ENCODE measurements at regions of chr2 and their contacts with region 1.

Region 1: DNA sequence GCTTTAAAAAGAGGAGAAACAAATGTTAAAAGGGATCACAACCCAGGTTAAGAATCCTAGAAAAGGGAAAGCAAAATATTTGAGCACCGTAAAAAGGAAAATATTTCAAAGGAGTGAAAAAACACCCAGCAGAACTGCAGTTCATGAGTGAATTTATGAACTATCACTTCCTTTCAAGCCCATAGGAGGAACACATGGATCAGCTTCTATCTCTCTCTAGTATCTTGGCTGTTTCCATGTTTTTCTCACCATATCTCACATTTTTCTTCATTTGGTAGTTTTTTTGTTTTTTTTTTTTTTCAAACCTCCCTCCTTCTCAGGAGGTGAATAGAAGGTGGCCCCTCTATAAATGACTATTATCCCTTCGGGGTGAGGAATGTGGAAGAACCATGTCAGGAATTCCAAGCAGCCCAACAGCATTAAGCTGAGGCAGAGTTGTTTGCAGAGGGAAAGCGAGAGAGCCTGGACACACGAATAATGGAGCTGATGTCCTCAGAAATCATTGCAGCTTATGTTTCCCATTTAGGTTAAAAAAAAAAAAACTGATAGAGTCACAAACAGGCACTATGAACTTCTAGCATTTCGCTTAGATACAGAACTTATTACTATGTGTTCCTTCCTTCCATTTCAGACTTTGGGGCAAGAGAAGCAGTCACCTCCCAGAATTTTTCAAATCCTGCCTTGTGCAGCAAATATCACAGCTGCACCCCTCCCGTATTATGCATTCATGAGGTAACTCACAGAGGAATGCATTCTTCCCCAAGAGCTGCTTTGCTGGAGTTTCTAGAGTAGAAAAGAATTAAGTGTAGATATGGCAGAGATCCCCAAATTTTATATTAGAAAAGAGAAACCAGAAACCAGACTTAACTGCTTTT is 315.6 kb downstream of the IRS1 start:
- DNase-seq: peak; percentile 61
- ATAC-seq: peak; percentile 89
- H3K4me3 ChIP-seq: no peak overlapping the region; the same call in 1 of the 2 replicates
- H3K27ac ChIP-seq: peak overlapping the region; percentile 43
- H3K4me1 ChIP-seq: peaks cover 15% of the 10 kb centered on the region
- H3K27me3 ChIP-seq: no peaks in the 10 kb centered on the region
- CTCF ChIP-seq: no peak
- POLR2A ChIP-seq: no peak
- RAD21 ChIP-seq: no peak

Region 2: GRCh38 chr2:226583715-226584114 is 99.7 kb after region 1 on chr2:
- CTCF ChIA-PET with region 1: no interaction called
- POLR2A ChIA-PET with region 1: no interaction called
- dilution Hi-C with region 1: no loop called
- in situ Hi-C with region 1: no loop called
- intact Hi-C with region 1: loop called (anchors 5 kb)
- DNase-seq: peak; percentile 89
- ATAC-seq: peak; percentile 90
- H3K4me3 ChIP-seq: no peak overlapping the region
- H3K27ac ChIP-seq: peak overlapping the region; percentile 34
- H3K4me1 ChIP-seq: peaks cover 23% of the 10 kb centered on the region; the same call in 1 of the 2 replicates
- H3K27me3 ChIP-seq: no peaks in the 10 kb centered on the region
- CTCF ChIP-seq: no peak
- POLR2A ChIP-seq: no peak
- RAD21 ChIP-seq: 0 out of 2 replicates have a peak, but pooled peaks have one; percentile 10

Region 3: DNA sequence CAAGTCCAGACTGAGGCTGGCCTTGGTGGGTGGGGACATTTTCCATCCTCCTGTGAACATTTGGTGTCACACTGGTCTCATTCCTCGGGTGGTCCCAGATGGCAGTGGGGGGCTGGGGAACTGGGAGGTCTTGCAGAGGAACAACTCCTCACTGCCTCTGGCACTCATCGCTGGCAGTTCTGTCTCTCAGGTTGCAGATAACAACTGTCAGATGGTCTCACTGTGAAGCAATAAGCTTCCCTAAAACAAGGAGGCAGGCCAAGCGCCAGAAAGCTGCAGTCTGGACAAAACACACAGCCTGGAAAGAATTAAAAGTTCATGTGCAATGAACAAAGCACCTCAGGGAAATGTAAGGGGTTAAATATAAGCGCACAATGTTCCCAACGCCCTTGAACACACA is 237.6 kb after region 1 on chr2:
- CTCF ChIA-PET with region 1: no interaction called
- POLR2A ChIA-PET with region 1: no interaction called
- dilution Hi-C with region 1: no loop called
- in situ Hi-C with region 1: no loop called
- intact Hi-C with region 1: loop called (anchors 2 kb)
- DNase-seq: peak; percentile 36
- ATAC-seq: 0 out of 2 replicates have a peak, but pooled peaks have one; percentile 19
- H3K4me3 ChIP-seq: no peak overlapping the region
- H3K27ac ChIP-seq: no peak overlapping the region
- H3K4me1 ChIP-seq: peaks cover 12% of the 10 kb centered on the region
- H3K27me3 ChIP-seq: no peaks in the 10 kb centered on the region
- CTCF ChIP-seq: no peak
- POLR2A ChIP-seq: no peak
- RAD21 ChIP-seq: no peak

Region 4: DNA sequence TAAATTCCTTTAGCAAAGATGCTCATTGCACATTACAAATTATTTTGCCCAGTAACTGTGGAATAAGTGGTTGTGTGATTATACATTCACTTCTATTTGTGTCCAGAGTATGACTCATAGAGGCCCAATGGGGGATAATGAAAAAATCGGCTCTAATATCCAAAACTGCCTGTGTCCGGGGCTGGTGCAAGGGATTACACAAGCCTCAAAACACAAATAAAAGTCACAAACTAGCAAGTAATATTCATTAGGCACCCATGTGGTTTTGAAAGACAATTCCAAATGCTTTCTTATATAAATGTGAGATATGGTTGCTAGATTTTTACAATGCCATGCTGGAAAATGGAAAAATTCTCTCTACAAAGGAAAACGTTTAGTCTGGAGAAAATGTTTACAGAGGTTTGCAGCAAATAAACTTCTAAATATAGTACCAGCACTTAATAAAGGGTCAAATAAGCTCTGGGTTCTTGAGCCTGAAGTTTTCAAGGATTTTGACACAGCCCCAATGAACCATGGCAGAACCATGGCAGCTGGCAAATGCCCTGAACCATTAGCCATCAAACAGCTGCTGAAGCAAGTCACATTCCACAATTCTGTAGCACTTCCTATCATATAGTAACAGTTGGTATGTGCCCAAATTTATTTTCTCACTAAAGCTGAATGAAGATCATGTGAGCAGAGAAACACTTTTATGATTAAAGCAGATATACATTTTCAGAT is 275.1 kb after region 1 on chr2:
- CTCF ChIA-PET with region 1: interaction called, 5 read pairs
- POLR2A ChIA-PET with region 1: interaction called, 10 read pairs
- dilution Hi-C with region 1: no loop called
- in situ Hi-C with region 1: no loop called
- intact Hi-C with region 1: no loop called
- DNase-seq: peak; percentile 87
- ATAC-seq: peak; percentile 24
- H3K4me3 ChIP-seq: no peak overlapping the region
- H3K27ac ChIP-seq: peak overlapping the region; percentile 96
- H3K4me1 ChIP-seq: peaks cover 28% of the 10 kb centered on the region
- H3K27me3 ChIP-seq: no peaks in the 10 kb centered on the region
- CTCF ChIP-seq: no peak
- POLR2A ChIP-seq: no peak
- RAD21 ChIP-seq: no peak

Region 5: GRCh38 chr2:226984750-226985582 is 501.0 kb after region 1 on chr2:
- CTCF ChIA-PET with region 1: no interaction called
- POLR2A ChIA-PET with region 1: no interaction called
- dilution Hi-C with region 1: no loop called
- in situ Hi-C with region 1: no loop called
- intact Hi-C with region 1: loop called (anchors 5 kb)
- DNase-seq: peak; percentile 83
- ATAC-seq: peak; percentile 92
- H3K4me3 ChIP-seq: no peak overlapping the region
- H3K27ac ChIP-seq: no peak overlapping the region
- H3K4me1 ChIP-seq: 0 out of 2 replicates have a peak, but pooled peaks cover 4% of the 10 kb centered on the region
- H3K27me3 ChIP-seq: no peaks in the 10 kb centered on the region
- CTCF ChIP-seq: peak; percentile 86
- POLR2A ChIP-seq: 0 out of 2 replicates have a peak, but pooled peaks have one; percentile 24
- RAD21 ChIP-seq: peak; percentile 92